Activated CD4-positive, alpha-beta T cell treated with anti-CD3 and anti-CD28 coated beads for 36 hours (primary cell): ENCODE measurements at regions of chr6 and their contacts with region 1.

Region 1: DNA sequence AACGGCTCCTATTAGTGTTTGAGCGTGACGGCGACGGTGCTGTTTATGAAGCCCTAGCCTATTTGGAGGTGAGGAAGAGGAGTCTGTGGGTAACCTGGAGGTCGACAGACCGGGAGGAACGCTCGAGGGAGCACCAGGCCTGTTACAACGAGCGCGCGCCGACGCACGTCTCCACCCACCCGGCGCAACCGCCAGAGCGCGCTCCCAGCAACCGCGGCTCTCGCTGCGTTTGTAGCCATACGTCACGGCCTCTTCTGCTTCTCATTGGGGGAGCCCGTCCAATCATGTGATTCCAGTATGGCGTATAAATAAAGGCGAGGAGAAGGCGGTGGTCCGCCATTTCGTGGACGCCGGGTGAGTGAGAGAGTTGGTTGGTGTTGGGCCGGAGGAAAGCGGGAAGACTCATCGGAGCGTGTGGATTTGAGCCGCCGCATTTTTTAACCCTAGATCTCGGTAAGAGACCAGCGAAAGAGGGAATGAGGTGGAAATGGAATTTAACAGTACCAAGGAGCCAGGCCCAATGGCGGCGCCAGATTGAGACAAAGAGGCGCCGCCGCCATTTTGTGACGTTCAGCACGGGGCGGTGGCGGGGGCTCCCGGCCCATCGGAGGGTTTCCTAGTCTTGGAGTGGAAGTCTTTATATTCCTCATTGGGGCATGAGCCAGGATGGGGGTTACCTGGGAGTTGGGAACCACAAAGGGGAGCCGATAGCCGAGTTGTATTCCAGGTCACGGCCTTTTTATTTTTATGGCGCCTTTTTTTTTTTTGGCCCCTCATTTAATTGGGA is at the start of gene SRSF3:
- DNase-seq: peak; percentile 98
- ATAC-seq: peak; percentile 92
- H3K4me3 Mint-ChIP-seq: peak within 1 kb of the TSS; percentile 88
- H3K27ac Mint-ChIP-seq: peak within 1 kb of the TSS; percentile 99
- H3K4me1 Mint-ChIP-seq: peaks cover 21% of the 10 kb centered on the region
- H3K27me3 Mint-ChIP-seq: no peaks in the 10 kb centered on the region
- total RNA-seq, gene SRSF3: 298 to 464 TPM

Region 2: DNA sequence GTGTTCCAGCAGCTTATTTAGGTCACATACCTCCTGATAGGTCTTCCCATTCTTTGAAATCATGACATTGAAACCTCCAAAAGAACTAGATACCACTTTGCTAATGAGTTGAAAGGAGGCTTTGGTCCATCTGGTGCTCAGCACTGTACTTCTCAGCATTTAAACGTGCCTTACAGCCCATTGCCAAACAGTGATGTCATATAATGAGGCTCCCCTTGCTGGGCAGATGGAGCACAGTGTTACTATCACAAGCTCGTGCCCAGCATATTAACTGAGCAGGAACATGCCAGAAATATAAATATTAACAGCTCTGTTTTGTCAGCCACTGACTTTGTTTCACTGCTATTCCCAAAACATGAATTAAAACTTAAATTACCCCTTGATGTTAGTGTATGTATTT is 489.4 kb before region 1 on chr6:
- CTCF ChIA-PET with region 1: no interaction called
- POLR2A ChIA-PET with region 1: no interaction called
- intact Hi-C with region 1: no loop called
- DNase-seq: no peak
- ATAC-seq: no peak
- H3K4me3 Mint-ChIP-seq: no peak overlapping the region
- H3K27ac Mint-ChIP-seq: no peak overlapping the region
- H3K4me1 Mint-ChIP-seq: peaks cover 47% of the 10 kb centered on the region
- H3K27me3 Mint-ChIP-seq: no peaks in the 10 kb centered on the region

Region 3: GRCh38 chr6:36131511-36132245 is 462.5 kb before region 1 on chr6:
- CTCF ChIA-PET with region 1: no interaction called
- POLR2A ChIA-PET with region 1: interaction called, 3 read pairs
- intact Hi-C with region 1: loop called in 1 of 2 experiments (anchors 2 kb)
- DNase-seq: peak; percentile 80
- ATAC-seq: peak; percentile 84
- H3K4me3 Mint-ChIP-seq: peak overlapping the region; percentile 84
- H3K27ac Mint-ChIP-seq: peak overlapping the region; percentile 96
- H3K4me1 Mint-ChIP-seq: peaks cover 55% of the 10 kb centered on the region
- H3K27me3 Mint-ChIP-seq: no peaks in the 10 kb centered on the region

Region 4: GRCh38 chr6:36442671-36443470 is 151.4 kb before region 1 on chr6 and contains the starts of genes KCTD20 and PXT1:
- CTCF ChIA-PET with region 1: interaction called, 3 read pairs
- POLR2A ChIA-PET with region 1: interaction called, 7 read pairs
- intact Hi-C with region 1: loop called (anchors 1 to 2 kb)
- DNase-seq: peak; percentile 94
- ATAC-seq: peak; percentile 78
- H3K4me3 Mint-ChIP-seq: peak within 1 kb of the TSS; percentile 95
- H3K27ac Mint-ChIP-seq: peak within 1 kb of the TSS; percentile 97
- H3K4me1 Mint-ChIP-seq: peaks cover 27% of the 10 kb centered on the region
- H3K27me3 Mint-ChIP-seq: no peaks in the 10 kb centered on the region
- total RNA-seq, gene KCTD20: 46.5 to 50.6 TPM
- total RNA-seq, gene PXT1: 0.11 to 0.14 TPM

Region 5: GRCh38 chr6:36570264-36570663 is 24.0 kb before region 1 on chr6:
- CTCF ChIA-PET with region 1: no interaction called
- POLR2A ChIA-PET with region 1: interaction called, 11 read pairs
- intact Hi-C with region 1: no loop called
- DNase-seq: no peak
- ATAC-seq: peak; percentile 44
- H3K4me3 Mint-ChIP-seq: no peak overlapping the region
- H3K27ac Mint-ChIP-seq: no peak overlapping the region
- H3K4me1 Mint-ChIP-seq: no peaks in the 10 kb centered on the region
- H3K27me3 Mint-ChIP-seq: no peaks in the 10 kb centered on the region

Region 6: DNA sequence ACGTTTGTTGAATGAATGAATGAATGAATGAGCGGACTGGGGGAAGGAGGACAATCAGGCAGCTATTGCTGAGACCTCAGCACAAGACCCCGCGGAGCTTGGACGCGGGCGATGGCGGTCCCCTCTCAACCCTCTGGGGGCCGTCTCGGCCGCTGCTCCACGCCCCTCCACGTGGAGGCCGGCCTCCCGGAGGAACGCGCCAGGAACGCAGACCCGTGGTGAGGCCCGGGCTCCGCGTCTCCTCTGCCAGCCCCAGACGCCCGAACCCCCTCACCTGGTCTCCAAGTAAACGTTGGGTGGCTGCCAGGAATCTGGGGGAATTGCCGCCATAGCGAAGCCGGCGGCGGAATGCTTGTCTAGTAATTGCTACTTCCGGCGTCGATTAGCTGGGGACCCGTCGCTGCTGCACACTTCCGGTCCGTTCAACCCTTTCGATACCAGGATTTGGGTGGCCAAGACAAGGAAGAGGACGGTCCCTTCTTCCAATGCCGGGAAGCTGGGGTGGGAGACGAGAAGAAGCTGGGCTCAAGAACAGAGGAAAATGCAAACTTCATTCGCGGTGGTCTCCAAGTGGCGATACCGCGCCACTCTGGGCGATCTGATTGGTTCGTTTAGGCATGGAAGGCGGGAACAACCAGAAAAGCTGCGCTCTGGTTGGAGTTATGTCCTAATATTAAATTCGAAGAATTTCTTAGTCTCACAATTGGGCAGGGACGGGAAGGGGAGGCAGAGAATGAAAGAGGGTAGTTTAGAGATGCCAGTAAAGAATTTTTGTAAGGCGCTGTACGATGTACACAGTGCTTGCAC is 280.4 kb after region 1 on chr6 and contains the start of gene PPIL1:
- CTCF ChIA-PET with region 1: no interaction called
- POLR2A ChIA-PET with region 1: no interaction called
- intact Hi-C with region 1: loop called in 1 of 2 experiments (anchors 5 kb)
- DNase-seq: peak; percentile 90
- ATAC-seq: peak; percentile 80
- H3K4me3 Mint-ChIP-seq: peak within 1 kb of the TSS; percentile 98
- H3K27ac Mint-ChIP-seq: peak within 1 kb of the TSS; percentile 99
- H3K4me1 Mint-ChIP-seq: peaks cover 45% of the 10 kb centered on the region
- H3K27me3 Mint-ChIP-seq: peaks cover 7% of the 10 kb centered on the region
- total RNA-seq, gene PPIL1: 45.9 to 46.0 TPM